PC-3 (cell line): ENCODE measurements at regions of chr3 and their contacts with region 1.

Region 1: GRCh38 chr3:9352917-9353752 is 9.7 kb upstream of the THUMPD3 start:
- DNase-seq: peak; percentile 80
- ATAC-seq: peak; percentile 52
- H3K4me3 ChIP-seq: peak overlapping the region; percentile 17; the same call in 1 of the 2 replicates
- H3K27ac ChIP-seq: peak overlapping the region; percentile 98
- H3K4me1 ChIP-seq: peaks cover 75% of the 10 kb centered on the region
- H3K27me3 ChIP-seq: no peaks in the 10 kb centered on the region
- CTCF ChIP-seq: peak; percentile 99

Region 2: DNA sequence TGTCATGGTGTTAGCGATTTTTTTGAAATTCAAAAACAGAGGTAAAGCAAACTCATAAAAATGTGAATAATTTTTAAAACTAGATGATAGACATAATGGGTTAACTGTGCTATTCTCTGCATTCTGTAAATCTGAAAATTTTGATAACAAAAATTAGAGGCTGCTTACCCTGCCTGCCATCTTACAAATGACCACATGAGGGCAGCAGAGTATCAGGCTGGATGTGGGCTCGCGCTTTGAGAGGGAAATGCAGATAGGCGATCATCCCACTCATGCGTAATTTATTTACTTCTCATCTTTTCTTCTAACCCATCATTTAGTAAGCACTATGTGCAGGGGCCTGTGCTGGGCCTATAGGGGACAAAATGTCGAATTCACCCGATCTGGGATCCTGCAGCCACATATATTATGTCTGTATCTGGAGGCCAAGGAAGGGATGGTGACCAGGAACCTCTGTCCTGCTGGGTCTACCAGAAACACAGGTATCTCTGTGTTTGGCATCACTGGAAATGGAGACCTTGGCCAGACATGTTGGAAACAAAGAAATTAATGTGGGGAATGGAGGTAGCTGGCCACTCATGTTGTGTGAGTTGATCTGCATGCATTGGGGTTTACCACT is 382.1 kb before region 1 on chr3:
- CTCF ChIA-PET with region 1: no interaction called
- POLR2A ChIA-PET with region 1: no interaction called
- intact Hi-C with region 1: loop called (anchors 1 kb)
- DNase-seq: peak; percentile 86
- ATAC-seq: peak; percentile 72
- H3K4me3 ChIP-seq: no peak overlapping the region
- H3K27ac ChIP-seq: no peak overlapping the region
- H3K4me1 ChIP-seq: peaks cover under 1% of the 10 kb centered on the region; the same call in 1 of the 2 replicates
- H3K27me3 ChIP-seq: no peaks in the 10 kb centered on the region
- CTCF ChIP-seq: peak; percentile 95

Region 3: DNA sequence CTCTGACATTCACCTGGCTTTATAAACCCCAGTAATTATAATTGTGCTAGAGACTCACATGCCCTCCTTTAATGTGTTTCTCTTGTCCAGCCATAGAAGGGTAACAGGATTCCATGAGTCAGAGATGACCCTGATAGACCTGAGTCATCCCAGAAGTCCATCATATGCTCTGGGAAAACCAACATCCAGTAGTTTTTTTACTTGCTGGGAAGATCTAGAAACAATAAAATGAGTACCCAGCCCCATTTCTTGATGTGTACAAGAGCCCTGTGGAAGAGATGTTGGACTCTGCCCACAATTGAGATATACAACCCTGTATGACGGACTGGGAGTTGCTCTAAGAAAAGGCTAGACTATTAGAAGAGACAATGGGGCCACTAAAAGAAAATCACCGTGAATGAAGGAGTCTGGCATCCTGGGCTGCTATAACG is 12.6 kb before region 1 on chr3:
- CTCF ChIA-PET with region 1: no interaction called
- POLR2A ChIA-PET with region 1: no interaction called
- intact Hi-C with region 1: loop called (anchors 1 kb)
- DNase-seq: peak; percentile 84
- ATAC-seq: peak; percentile 98
- H3K4me3 ChIP-seq: no peak overlapping the region
- H3K27ac ChIP-seq: peak overlapping the region; percentile 95
- H3K4me1 ChIP-seq: peaks cover 31% of the 10 kb centered on the region
- H3K27me3 ChIP-seq: no peaks in the 10 kb centered on the region
- CTCF ChIP-seq: no peak

Region 4: GRCh38 chr3:9396700-9397521 is 43.8 kb after region 1 on chr3:
- CTCF ChIA-PET with region 1: interaction called, 5 read pairs
- POLR2A ChIA-PET with region 1: interaction called, 15 read pairs
- intact Hi-C with region 1: loop called (anchors 2 kb)
- DNase-seq: peak; percentile 99
- ATAC-seq: peak; percentile 75
- H3K4me3 ChIP-seq: peak overlapping the region; percentile 80
- H3K27ac ChIP-seq: peak overlapping the region; percentile 92
- H3K4me1 ChIP-seq: peaks cover 54% of the 10 kb centered on the region
- H3K27me3 ChIP-seq: no peaks in the 10 kb centered on the region
- CTCF ChIP-seq: no peak

Region 5: DNA sequence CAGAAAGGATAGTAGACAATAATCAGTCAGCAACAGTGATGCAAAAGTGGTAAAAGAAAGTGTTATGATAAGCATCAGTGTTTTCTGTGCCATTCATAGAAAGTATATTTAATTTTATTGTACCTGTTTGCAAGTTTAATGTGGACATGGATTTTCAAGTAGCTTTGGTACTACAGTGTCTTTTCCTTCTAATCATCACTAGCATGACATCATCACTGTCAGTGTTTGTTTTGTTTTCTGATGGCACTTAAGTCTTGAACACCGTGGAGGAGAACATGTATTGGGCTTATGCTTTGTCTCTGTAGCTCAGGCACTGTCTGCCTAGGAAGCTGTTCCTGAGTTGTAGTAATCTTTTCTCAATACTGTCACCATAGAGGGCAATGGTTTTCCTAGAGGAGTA is 86.2 kb after region 1 on chr3:
- CTCF ChIA-PET with region 1: interaction called, 3 read pairs
- POLR2A ChIA-PET with region 1: no interaction called
- intact Hi-C with region 1: loop called (anchors 5 kb)
- DNase-seq: no peak
- ATAC-seq: 0 out of 2 replicates have a peak, but pooled peaks have one; percentile 20
- H3K4me3 ChIP-seq: no peak overlapping the region
- H3K27ac ChIP-seq: no peak overlapping the region
- H3K4me1 ChIP-seq: no peaks in the 10 kb centered on the region
- H3K27me3 ChIP-seq: no peaks in the 10 kb centered on the region
- CTCF ChIP-seq: no peak